Body of pancreas (tissue), 4 donors: ENCODE measurements at regions of chr21 and their contacts with region 1.

Region 1: DNA sequence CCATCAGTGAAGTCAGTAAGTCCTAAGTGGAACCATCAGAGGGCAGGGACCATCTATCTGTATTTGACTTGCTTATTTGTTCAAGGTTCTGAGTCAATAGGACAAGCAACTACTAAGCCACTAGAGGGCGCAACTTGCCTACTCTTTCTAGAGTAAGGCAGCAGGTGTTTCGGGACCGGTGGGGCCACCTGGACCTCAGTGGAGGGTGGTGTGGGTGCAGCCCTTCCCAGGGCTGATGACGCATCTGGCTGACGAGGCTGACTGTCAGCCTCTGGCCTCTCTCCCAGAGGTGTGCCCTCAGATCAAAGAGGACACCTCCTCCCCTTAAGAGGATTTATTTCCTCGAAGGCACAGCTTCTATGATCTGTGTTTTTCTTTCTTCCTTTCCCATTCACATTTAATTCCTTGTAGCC is 6.6 kb downstream of the CBR3 start:
- DNase-seq: peak; percentile 91 to 97 (median 96)
- ATAC-seq: peak; percentile 97
- H3K4me3 ChIP-seq: no peak overlapping the region
- H3K27ac ChIP-seq: peak overlapping the region in 3 of 4 donors; percentile 15 to 63 (median 53)
- H3K4me1 ChIP-seq: peaks cover 10% of the 10 kb centered on the region
- H3K27me3 ChIP-seq: no peaks in the 10 kb centered on the region
- CTCF ChIP-seq: peak; percentile 67 to 95 (median 92)
- POLR2A ChIP-seq: no peak

Region 2: GRCh38 chr21:36330904-36331303 is 189.4 kb after region 1 on chr21:
- intact Hi-C with region 1: loop called (anchors 5 kb)
- DNase-seq: peak; percentile 51 to 73 (median 59)
- ATAC-seq: peak; percentile 81
- H3K4me3 ChIP-seq: no peak overlapping the region
- H3K27ac ChIP-seq: no peak overlapping the region
- H3K4me1 ChIP-seq: peaks cover 34% of the 10 kb centered on the region
- H3K27me3 ChIP-seq: no peaks in the 10 kb centered on the region
- CTCF ChIP-seq: peak; percentile 20 to 77 (median 72)
- POLR2A ChIP-seq: no peak